Activated CD8-positive, alpha-beta T cell treated with anti-CD3 and anti-CD28 coated beads for 36 hours (primary cell): ENCODE measurements at regions of chrX and their contacts with region 1.

Region 1: GRCh38 chrX:153971450-153972367 is at the start of gene HCFC1:
- DNase-seq: peak; percentile 93
- ATAC-seq: peak; percentile 32
- H3K4me3 Mint-ChIP-seq: peak within 1 kb of the TSS; percentile 93
- H3K27ac Mint-ChIP-seq: peak within 1 kb of the TSS; percentile 100
- H3K4me1 Mint-ChIP-seq: peaks cover 23% of the 10 kb centered on the region
- H3K27me3 Mint-ChIP-seq: no peaks in the 10 kb centered on the region
- CTCF ChIP-seq: no peak
- total RNA-seq, gene HCFC1: 115 to 116 TPM

Region 2: DNA sequence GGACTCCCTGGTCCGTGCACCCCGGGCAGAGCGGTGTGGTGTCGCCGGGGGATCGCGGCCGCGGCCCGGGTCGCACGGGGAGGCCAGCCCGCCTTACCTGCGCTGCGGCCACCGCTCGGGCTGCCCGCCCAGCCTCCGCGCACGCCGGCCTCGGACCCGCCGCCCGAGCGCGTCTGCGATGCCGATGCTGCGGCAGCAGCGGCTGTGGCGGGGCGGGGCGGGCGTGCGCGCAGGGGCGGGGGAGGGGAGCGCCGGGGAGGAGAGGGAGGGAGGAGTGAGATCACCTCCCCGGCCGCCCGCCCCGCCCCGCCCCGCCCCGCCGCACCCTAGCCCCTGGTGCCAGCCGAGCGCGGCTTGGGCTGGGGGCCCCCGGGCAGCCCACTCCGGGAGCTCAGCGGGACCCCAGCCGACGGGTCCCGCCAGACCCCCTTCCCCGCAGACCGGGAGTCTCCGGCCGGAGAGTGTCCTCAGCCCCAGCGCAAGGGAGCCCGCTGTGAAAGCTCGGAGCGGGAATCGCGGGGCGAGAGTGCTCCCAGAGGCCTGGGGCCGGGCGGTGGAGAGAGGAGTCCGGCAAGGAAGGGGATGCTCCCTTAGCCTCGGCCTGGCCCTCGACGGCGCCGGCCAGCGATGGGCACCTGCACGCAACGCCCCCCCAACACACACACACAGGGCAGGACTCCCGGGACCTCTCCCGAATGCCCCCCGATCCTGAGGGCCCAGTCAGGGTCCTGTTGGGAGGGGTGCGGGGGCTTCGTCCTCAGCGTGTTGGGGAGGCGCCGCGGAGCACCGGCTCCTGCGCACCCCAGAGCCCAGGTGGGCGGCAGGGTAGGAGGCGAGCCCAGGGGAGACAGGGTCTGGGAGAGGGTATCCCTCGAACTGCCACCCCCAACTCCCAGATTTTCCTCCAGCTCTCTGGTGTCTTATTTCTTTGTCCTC is 85.5 kb before region 1 on chrX and contains the start of gene L1CAM:
- CTCF ChIA-PET with region 1: no interaction called
- POLR2A ChIA-PET with region 1: no interaction called
- intact Hi-C with region 1: no loop called
- DNase-seq: no peak
- ATAC-seq: peak; percentile 59
- H3K4me3 Mint-ChIP-seq: peak within 1 kb of the TSS; percentile 53
- H3K27ac Mint-ChIP-seq: no peak within 1 kb of the TSS
- H3K4me1 Mint-ChIP-seq: peaks cover 2% of the 10 kb centered on the region
- H3K27me3 Mint-ChIP-seq: peaks cover 23% of the 10 kb centered on the region
- CTCF ChIP-seq: no peak
- total RNA-seq, gene L1CAM: 2.1 to 2.2 TPM

Region 3: GRCh38 chrX:153953342-153953830 is 18.3 kb before region 1 on chrX:
- CTCF ChIA-PET with region 1: interaction called, 40 read pairs
- POLR2A ChIA-PET with region 1: interaction called, 64 read pairs
- intact Hi-C with region 1: no loop called
- DNase-seq: peak; percentile 85
- ATAC-seq: peak; percentile 78
- H3K4me3 Mint-ChIP-seq: no peak overlapping the region
- H3K27ac Mint-ChIP-seq: peak overlapping the region; percentile 57
- H3K4me1 Mint-ChIP-seq: peaks cover 29% of the 10 kb centered on the region
- H3K27me3 Mint-ChIP-seq: no peaks in the 10 kb centered on the region
- CTCF ChIP-seq: peak; percentile 91

Region 4: GRCh38 chrX:153981771-153982533 is 10.2 kb after region 1 on chrX:
- CTCF ChIA-PET with region 1: no interaction called
- POLR2A ChIA-PET with region 1: interaction called, 38 read pairs
- intact Hi-C with region 1: no loop called
- DNase-seq: peak; percentile 80
- ATAC-seq: peak; percentile 40
- H3K4me3 Mint-ChIP-seq: peak overlapping the region; percentile 55
- H3K27ac Mint-ChIP-seq: peak overlapping the region; percentile 90
- H3K4me1 Mint-ChIP-seq: peaks cover 45% of the 10 kb centered on the region
- H3K27me3 Mint-ChIP-seq: no peaks in the 10 kb centered on the region
- CTCF ChIP-seq: no peak